A673 (cell line): ENCODE measurements at regions of chr16 and their contacts with region 1.

Region 1: GRCh38 chr16:3696425-3697218 is 20.7 kb downstream of the TRAP1 start:
- DNase-seq: peak; percentile 54
- H3K4me3 ChIP-seq: no peak overlapping the region
- H3K27ac ChIP-seq: peak overlapping the region; percentile 49
- H3K4me1 ChIP-seq: no peaks in the 10 kb centered on the region
- H3K27me3 ChIP-seq: no peaks in the 10 kb centered on the region
- CTCF ChIP-seq: no peak

Region 2: GRCh38 chr16:3674513-3675295 is 21.9 kb before region 1 on chr16:
- CTCF ChIA-PET with region 1: no interaction called
- POLR2A ChIA-PET with region 1: interaction called, 16 read pairs
- intact Hi-C with region 1: no loop called
- DNase-seq: no peak
- H3K4me3 ChIP-seq: no peak overlapping the region
- H3K27ac ChIP-seq: no peak overlapping the region
- H3K4me1 ChIP-seq: no peaks in the 10 kb centered on the region
- H3K27me3 ChIP-seq: no peaks in the 10 kb centered on the region
- CTCF ChIP-seq: no peak

Region 3: DNA sequence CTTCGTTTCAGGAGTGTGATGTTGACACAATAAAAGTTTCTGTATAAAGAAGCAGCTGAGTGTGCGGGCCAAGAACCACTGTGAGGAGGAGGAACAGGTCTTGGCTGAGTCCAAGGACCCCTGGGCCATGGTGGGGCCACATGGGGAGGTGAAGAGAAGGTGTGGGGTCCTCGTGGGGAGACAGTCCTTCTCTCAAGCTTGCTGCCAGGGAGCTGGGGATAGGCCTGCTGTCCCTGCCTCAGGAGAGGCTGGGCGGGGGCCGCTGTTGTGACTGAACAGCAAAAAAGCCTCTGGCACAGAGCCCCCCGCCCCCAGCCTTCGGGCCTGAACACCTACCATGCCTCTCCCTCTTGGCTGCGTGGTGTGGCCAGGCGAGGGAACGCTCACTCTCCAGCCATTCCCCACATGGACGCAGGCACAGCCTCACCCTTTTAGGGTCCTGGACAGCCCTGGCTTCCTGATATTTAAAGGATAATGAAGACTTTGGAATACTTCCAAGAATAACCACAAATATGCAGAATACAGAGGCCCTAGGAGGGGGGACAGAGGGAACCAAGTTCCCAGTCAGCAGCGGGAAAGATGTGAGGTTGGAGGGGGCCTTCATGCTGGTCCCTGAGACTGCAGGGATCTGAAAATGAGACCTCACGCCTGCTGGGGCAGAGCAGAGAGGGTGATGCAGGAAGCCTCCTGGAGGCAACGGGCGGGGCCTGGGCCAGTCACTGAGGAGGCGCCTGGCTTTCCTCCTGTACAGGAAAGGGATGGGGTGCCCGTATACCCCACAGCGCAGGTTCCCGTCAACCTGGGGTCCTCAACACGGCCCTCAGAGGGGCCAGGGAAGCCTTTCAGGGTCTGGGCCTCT is 283.9 kb after region 1 on chr16:
- CTCF ChIA-PET with region 1: no interaction called
- POLR2A ChIA-PET with region 1: no interaction called
- intact Hi-C with region 1: no loop called
- DNase-seq: peak; percentile 70
- H3K4me3 ChIP-seq: no peak overlapping the region
- H3K27ac ChIP-seq: peak overlapping the region; percentile 67
- H3K4me1 ChIP-seq: peaks cover 16% of the 10 kb centered on the region
- H3K27me3 ChIP-seq: no peaks in the 10 kb centered on the region
- CTCF ChIP-seq: no peak